ENCODE measurements at regions of chr14 and their contacts with region 1.

Region 1: GRCh38 chr14:23335623-23336022 is 14.4 kb downstream of the PABPN1 start:
- DNase-seq: no peak
- ATAC-seq: no peak
- H3K4me3 ChIP-seq: no peak overlapping the region
- H3K27ac ChIP-seq: no peak overlapping the region
- H3K4me1 ChIP-seq: no peaks in the 10 kb centered on the region
- H3K27me3 ChIP-seq: no peaks in the 10 kb centered on the region
- CTCF ChIP-seq: no peak
- POLR2A ChIP-seq: no peak

Region 2: DNA sequence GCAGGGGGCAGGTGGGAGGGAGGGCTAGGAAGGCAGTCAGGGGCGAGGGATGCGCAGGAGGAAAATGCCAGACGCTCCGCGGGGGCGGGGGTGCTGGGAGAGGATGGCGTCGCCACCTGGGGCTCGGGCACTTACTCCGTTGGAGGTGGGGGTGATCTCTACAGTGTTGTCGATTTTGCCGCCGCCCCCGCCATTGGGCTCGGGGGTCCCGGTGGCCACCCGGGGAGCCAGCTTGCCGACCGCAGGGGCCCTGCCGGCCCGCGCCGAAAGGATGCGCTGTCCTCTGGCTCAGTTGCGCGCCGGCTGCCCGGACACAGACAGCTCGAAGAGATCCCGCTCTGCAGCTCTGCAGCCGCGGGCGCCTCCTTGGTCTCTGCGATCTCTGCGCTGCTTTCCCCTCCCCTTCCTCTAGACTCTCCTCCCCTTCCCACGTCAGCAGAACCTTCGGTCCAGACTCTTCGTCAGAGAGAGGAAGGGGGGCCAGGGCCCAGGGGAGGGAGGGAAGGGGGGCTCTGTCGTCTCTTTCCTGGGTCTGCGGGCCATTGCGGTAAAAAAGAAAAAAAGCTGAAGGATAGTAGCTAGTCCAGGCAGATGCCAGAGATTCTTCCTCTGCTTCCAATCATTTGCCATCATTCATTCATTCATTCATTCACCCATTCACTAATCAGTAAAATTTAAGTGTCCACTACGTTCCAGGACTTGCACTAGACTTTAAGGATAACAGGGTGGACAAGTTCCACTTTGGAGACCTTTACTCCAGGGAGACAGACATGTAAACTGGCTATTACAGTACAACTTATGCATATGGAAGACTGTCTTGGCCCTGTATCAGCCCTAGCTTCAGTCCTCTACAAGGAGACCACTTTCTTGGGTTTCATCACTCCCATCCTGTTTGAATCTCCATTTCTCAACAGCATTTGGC is 17.1 kb after region 1 on chr14 and contains the start of gene SLC22A17:
- intact Hi-C with region 1: no loop called
- DNase-seq: peak; percentile 81 to 85 (median 83)
- ATAC-seq: peak; percentile 84 to 94 (median 90)
- H3K4me3 ChIP-seq: peak within 1 kb of the TSS; percentile 56 to 89 (median 69)
- H3K27ac ChIP-seq: peak within 1 kb of the TSS in 9 of 12 donors; percentile 4 to 68 (median 42)
- H3K4me1 ChIP-seq: peaks cover 4 to 17% (median 11%) of the 10 kb centered on the region in 12 donors
- H3K27me3 ChIP-seq: peaks cover 0 to 27% (median 0%) of the 10 kb centered on the region in 9 donors
- CTCF ChIP-seq: peak in 3 of 12 donors; percentile 8 to 36 (median 12)
- POLR2A ChIP-seq: peak in 1 of 2 donors; percentile 80
- total RNA-seq, gene SLC22A17: 8.5 to 14.9 (median 9.9) TPM

Region 3: DNA sequence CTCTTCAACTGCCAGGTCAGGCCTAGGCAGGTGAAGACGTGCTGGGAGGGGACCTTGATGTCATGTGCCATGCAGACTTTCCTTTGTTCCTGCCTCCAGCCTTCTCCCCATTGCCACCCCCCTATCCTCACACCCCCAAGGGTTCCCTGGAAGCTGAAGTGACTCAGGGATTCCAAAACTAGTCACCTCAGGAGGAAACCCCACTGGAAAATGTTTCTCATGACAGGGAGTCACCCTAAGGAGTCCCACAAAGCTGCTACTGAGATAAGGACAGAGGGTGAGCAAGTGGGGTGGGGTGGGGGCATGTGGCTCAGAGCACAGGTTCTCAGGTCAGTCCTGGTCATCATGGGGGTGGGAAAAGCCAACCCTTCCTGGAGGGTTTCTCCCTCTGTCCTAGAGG is 34.6 kb after region 1 on chr14:
- intact Hi-C with region 1: loop called in 2 of 10 experiments (anchors 5 kb)
- DNase-seq: no peak
- ATAC-seq: no peak
- H3K4me3 ChIP-seq: no peak overlapping the region
- H3K27ac ChIP-seq: no peak overlapping the region
- H3K4me1 ChIP-seq: peaks cover 0 to 15% (median 3%) of the 10 kb centered on the region in 12 donors
- H3K27me3 ChIP-seq: peaks cover 0 to 19% (median 0%) of the 10 kb centered on the region in 9 donors
- CTCF ChIP-seq: no peak
- POLR2A ChIP-seq: no peak